GM10248 (cell line): ENCODE measurements at regions of chr13 and their contacts with region 1.

Region 1: DNA sequence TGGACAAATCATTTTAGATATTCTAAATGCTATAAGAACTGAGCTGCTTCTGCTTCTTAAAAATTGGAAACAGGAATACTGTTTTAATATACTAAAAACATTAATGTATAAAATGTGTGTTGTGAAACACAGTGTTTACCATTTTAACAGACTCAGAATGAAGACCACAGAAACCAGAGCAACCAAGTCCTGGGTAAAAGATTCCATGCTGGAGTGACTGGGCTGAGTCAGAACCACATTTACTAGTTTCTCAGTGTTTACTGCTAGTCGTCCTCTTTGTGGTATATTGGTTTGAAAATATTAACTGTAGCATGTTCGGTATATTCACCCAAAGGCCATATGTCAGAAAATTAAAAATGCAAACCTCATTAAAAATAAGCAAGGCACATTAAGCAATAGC is 31.9 kb downstream of the ANKRD10 start:
- DNase-seq: no peak
- CTCF ChIP-seq: no peak

Region 2: DNA sequence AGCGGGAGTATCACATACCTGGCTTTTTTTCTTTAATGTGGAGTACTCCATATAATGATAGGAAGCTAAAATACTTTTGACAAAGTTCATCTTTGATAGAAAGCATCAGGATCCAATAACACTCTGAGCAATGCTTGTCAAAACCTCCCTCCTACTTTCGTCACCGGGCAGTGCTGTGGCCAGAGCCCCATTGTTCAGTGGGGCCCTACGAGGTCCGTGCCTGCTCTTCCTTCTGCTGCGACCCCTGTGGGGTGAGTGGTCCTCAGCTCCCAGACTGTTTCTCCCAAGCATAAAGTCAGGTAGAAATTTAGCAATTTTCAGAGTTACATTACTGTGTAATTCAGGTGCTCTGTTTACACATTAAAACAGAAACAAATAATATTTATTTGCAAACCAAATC is 19.3 kb before region 1 on chr13:
- CTCF ChIA-PET with region 1: no interaction called
- POLR2A ChIA-PET with region 1: no interaction called
- DNase-seq: no peak
- CTCF ChIP-seq: no peak

Region 3: GRCh38 chr13:110894097-110894496 is 11.1 kb after region 1 on chr13:
- CTCF ChIA-PET with region 1: interaction called, 11 read pairs
- POLR2A ChIA-PET with region 1: no interaction called
- DNase-seq: no peak
- CTCF ChIP-seq: no peak

Region 4: GRCh38 chr13:110915057-110915873 is 32.3 kb after region 1 on chr13 and contains the start of gene ANKRD10:
- CTCF ChIA-PET with region 1: interaction called, 16 read pairs
- POLR2A ChIA-PET with region 1: no interaction called
- DNase-seq: peak; percentile 99
- CTCF ChIP-seq: peak; percentile 83

Region 5: GRCh38 chr13:111074826-111075225 is 191.9 kb after region 1 on chr13:
- CTCF ChIA-PET with region 1: no interaction called
- POLR2A ChIA-PET with region 1: no interaction called
- DNase-seq: no peak
- CTCF ChIP-seq: no peak